Motor neuron (in vitro differentiated cells): ENCODE measurements at regions of chr16 and their contacts with region 1.

Region 1: GRCh38 chr16:77171745-77172635 is 19.0 kb upstream of the MON1B start:
- ATAC-seq: peak; percentile 53 to 84 (median 74)
- H3K4me3 ChIP-seq: no peak overlapping the region
- H3K27ac ChIP-seq: no peak overlapping the region
- H3K4me1 ChIP-seq: no peaks in the 10 kb centered on the region

Region 2: GRCh38 chr16:75198135-75198600 is 1973.8 kb before region 1 on chr16:
- in situ Hi-C with region 1: loop called in 2 of 9 experiments (anchors 25 kb)
- ATAC-seq: peak in 3 of 8 experiments; percentile 46 to 73 (median 54)
- H3K4me3 ChIP-seq: no peak overlapping the region
- H3K27ac ChIP-seq: no peak overlapping the region
- H3K4me1 ChIP-seq: no peaks in the 10 kb centered on the region

Region 3: DNA sequence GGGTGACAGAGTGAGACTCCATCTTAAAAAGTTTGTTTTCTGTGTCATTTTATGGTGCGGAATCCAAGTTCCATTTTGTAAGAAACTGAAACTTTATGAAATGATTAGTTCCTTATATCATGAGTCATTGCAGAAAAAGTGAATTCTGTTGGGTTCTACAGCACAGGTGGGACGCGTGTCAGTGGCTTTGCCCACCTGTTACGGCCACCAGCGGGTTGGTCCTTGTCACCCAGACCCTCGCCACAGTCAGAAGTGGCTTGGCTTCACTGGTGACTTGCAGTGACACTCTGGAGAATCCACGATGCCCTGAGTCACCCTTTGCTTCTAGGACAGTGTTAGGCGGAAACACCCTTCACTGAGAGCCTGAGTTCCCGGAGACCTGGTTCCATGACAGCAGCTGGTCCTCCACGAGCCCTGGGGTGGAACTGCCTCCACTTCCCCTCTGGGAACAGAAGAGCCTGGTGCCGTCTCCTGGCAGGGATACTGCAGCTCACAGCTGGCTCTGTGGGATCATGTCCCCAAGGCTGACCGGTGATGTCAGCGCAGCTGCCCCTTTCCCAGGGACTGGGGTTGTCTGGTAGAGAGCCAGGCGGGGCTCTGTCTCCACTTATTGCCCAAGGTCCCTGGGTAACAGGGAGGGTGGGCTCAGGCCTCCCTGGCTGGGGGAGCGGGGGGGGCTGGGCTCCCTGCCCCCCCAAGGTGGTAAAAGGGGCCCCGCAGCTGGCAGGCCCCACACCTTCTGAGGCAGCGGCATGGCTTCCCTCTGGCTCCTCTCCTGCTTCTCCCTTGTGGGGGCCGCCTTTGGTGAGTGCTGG is 1953.5 kb before region 1 on chr16 and contains the start of gene CTRB1:
- in situ Hi-C with region 1: loop called in 1 of 9 experiments (anchors 25 kb)
- ATAC-seq: peak in 1 of 8 experiments; percentile 36
- H3K4me3 ChIP-seq: no peak within 1 kb of the TSS
- H3K27ac ChIP-seq: no peak within 1 kb of the TSS
- H3K4me1 ChIP-seq: no peaks in the 10 kb centered on the region
- total RNA-seq, gene CTRB1: 0.11 to 1.5 (median 0.41) TPM

Region 4: GRCh38 chr16:75647492-75648264 is 1524.3 kb before region 1 on chr16 and contains the starts of genes KARS1 and TERF2IP:
- in situ Hi-C with region 1: loop called in 1 of 9 experiments (anchors 25 kb)
- ATAC-seq: peak; percentile 86 to 95 (median 94)
- H3K4me3 ChIP-seq: peak within 1 kb of the TSS; percentile 59 to 100 (median 75)
- H3K27ac ChIP-seq: peak within 1 kb of the TSS; percentile 93 to 98
- H3K4me1 ChIP-seq: peaks cover 8 to 15% of the 10 kb centered on the region in 2 donors
- total RNA-seq, gene KARS1: 106 to 187 (median 127) TPM
- total RNA-seq, gene TERF2IP: 55.4 to 212 (median 150) TPM

Region 5: GRCh38 chr16:75789237-75789636 is 1382.8 kb before region 1 on chr16:
- in situ Hi-C with region 1: loop called (anchors 10 to 25 kb)
- ATAC-seq: peak in 6 of 8 experiments; percentile 31 to 75 (median 56)
- H3K4me3 ChIP-seq: no peak overlapping the region
- H3K27ac ChIP-seq: no peak overlapping the region
- H3K4me1 ChIP-seq: peaks cover 5 to 16% of the 10 kb centered on the region in 2 donors

Region 6: DNA sequence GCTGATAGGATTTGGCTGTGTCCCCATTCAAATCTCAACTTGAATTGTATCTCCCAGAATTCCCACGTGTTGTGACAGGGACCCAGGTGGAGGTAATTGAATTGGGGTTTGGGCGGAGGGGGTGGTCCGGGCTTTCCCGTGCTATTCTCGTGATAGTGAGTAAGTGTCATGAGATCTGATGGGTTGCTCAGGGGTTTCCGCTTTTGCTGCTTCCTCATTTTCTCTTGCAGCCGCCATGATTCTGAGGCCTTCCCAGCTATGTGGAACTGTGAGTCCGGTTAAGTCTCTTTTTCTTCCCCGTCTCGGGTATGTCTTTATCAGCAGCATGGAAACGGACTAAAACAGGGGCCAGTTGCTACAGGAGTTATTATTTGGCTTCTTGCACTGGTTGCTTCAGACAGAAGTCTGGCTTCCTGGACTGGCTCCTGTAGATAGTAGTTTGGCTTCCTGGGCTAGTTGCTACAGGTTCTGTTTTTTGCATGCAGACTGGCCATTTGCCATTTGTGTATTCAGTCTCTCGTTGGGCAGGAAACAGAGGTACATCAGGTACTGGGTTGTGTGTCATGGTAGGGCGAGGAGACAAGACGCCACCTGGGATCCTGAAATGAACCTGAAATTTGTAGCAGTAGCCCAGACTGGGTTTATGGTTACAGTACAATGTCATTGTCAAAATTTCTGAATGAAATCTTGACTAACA is 862.2 kb before region 1 on chr16:
- in situ Hi-C with region 1: loop called in 1 of 9 experiments (anchors 25 kb)
- ATAC-seq: no peak
- H3K4me3 ChIP-seq: no peak overlapping the region
- H3K27ac ChIP-seq: no peak overlapping the region
- H3K4me1 ChIP-seq: no peaks in the 10 kb centered on the region

Region 7: GRCh38 chr16:76653390-76654026 is 518.5 kb before region 1 on chr16:
- in situ Hi-C with region 1: loop called in 1 of 9 experiments (anchors 25 kb)
- ATAC-seq: peak; percentile 55 to 93 (median 90)
- H3K4me3 ChIP-seq: no peak overlapping the region
- H3K27ac ChIP-seq: no peak overlapping the region
- H3K4me1 ChIP-seq: peaks cover 6 to 29% of the 10 kb centered on the region in 2 donors

Region 8: DNA sequence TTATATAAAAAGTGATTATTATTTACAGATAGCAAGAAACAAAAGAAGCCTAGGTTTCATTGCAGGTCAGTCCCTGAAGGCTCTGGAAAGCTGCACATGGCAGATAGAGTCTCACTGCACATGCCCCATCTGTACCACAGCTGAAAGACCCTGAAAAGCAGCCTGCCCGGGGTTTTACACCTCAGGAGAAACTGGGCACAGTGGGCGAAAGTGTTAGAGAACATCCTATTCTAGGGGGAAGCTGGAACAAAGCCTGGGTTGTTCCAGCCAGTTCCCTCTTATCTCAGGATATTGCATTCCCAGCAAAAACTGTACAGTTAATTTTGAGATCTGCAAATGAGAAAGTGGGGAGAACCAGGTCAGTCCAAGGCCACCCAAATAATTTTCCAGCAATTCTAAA is 475.1 kb before region 1 on chr16:
- in situ Hi-C with region 1: no loop called
- ATAC-seq: no peak
- H3K4me3 ChIP-seq: no peak overlapping the region
- H3K27ac ChIP-seq: no peak overlapping the region
- H3K4me1 ChIP-seq: no peaks in the 10 kb centered on the region